ENCODE measurements at regions of chr1 and their contacts with region 1.

Region 1: GRCh38 chr1:22189619-22190018 is 46.7 kb upstream of the WNT4 start:
- DNase-seq: no peak
- H3K4me3 ChIP-seq: no peak overlapping the region
- H3K27ac ChIP-seq: no peak overlapping the region
- H3K4me1 ChIP-seq: no peaks in the 10 kb centered on the region
- H3K27me3 ChIP-seq: no peaks in the 10 kb centered on the region
- CTCF ChIP-seq: no peak
- EP300 ChIP-seq: no peak
- POLR2A ChIP-seq: no peak

Region 2: GRCh38 chr1:22111620-22112019 is 78.0 kb before region 1 on chr1:
- intact Hi-C with region 1: loop called in 1 of 4 experiments (anchors 2 kb)
- DNase-seq: no peak
- H3K4me3 ChIP-seq: no peak overlapping the region
- H3K27ac ChIP-seq: no peak overlapping the region
- H3K4me1 ChIP-seq: peaks cover 38% of the 10 kb centered on the region
- H3K27me3 ChIP-seq: no peaks in the 10 kb centered on the region
- CTCF ChIP-seq: no peak
- EP300 ChIP-seq: no peak
- POLR2A ChIP-seq: no peak

Region 3: DNA sequence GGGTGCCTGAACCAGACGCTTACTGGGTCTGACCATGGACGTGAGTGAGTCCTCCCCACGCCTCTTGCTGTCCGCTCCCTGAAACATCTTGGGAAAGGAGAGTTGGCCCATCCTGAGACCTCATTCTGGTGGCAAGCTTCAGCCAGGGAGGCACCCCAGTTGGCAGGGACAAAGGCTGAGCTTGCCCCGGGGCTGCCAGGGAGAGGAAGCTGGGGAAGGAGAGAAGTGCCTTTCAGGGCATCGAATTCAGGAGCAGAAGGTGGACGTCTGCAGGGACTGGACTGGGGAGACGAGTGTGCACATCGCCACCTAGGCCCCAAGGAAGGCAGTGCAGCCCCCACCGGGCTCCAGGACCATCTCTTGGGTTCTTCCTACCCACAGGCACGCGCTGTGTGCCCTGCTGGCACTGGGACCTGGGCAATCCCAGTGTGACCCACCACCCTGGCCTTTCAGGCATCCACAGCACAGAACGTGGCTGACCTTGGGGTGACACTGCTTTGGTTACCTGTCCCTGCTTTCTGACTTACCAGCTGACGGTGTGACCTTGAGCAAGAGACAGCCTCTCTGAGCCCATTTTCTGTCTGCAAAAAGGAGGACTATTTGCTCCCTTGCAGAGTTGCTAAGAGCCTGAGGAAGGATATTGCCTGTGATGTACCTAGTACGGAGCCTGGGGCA is 86.2 kb after region 1 on chr1:
- intact Hi-C with region 1: no loop called
- DNase-seq: peak; percentile 55 to 77 (median 63)
- H3K4me3 ChIP-seq: no peak overlapping the region
- H3K27ac ChIP-seq: no peak overlapping the region
- H3K4me1 ChIP-seq: peaks cover 2% of the 10 kb centered on the region
- H3K27me3 ChIP-seq: no peaks in the 10 kb centered on the region
- CTCF ChIP-seq: peak; percentile 51 to 71 (median 55)
- EP300 ChIP-seq: no peak
- POLR2A ChIP-seq: no peak

Measured in ovary (tissue), 10 donors.